Dorsolateral prefrontal cortex (tissue), 120 donors: ENCODE measurements at regions of chr19 and their contacts with region 1.

Region 1: DNA sequence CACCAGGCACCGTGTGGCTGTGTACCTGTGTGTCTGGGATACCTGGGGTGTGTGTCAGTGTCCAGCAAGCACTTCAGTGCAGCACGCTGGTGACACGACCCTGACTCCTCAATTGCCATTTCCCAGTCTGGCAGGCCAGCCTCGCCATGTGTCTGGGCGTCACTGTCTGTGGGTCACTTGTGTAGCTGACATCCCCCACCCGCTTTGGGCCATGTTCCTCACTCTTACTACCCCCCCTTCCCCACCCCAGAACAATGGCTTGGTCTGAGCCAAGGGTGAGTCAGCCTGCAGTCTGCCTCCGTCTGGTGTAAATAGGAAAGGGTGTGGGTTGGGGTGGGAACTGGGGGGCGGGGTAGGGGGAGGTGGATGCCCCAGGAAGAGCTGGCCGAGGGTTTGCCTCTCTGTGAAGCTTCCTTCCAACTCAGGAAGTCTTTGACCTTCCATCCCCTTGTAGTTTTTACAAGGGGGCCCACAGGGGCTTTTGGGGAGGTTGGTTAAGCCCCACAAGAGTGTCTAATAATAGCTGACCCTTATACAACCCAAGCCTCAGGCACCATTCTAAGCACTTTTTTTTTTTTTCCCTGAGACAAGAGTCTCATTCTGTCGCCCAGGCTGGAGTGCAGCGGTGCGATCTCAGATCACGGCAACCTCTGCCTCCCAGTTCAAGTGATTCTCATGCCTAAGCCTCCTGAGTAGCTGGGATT is 17.6 kb downstream of the NOVA2 start:
- DNase-seq: peak in 9 of 10 donors; percentile 72 to 90 (median 86)
- H3K4me3 ChIP-seq: peak overlapping the region in 11 of 59 donors; percentile 7 to 37 (median 14)
- H3K27ac ChIP-seq: peak overlapping the region in 55 of 59 donors; percentile 29 to 83 (median 68)
- H3K27me3 ChIP-seq: no peaks in the 10 kb centered on the region
- CTCF ChIP-seq: peak in 16 of 56 donors; percentile 4 to 40 (median 25)

Region 2: GRCh38 chr19:45746866-45747265 is 209.2 kb before region 1 on chr19:
- intact Hi-C with region 1: no loop called
- DNase-seq: no peak
- H3K4me3 ChIP-seq: no peak overlapping the region
- H3K27ac ChIP-seq: no peak overlapping the region
- H3K27me3 ChIP-seq: no peaks in the 10 kb centered on the region
- CTCF ChIP-seq: no peak

Region 3: GRCh38 chr19:45919678-45920077 is 36.4 kb before region 1 on chr19:
- intact Hi-C with region 1: loop called (anchors 5 kb)
- DNase-seq: peak in 7 of 10 donors; percentile 44 to 73 (median 59)
- H3K4me3 ChIP-seq: peak overlapping the region in 41 of 59 donors; percentile 6 to 61 (median 35)
- H3K27ac ChIP-seq: peak overlapping the region in 50 of 59 donors; percentile 8 to 87 (median 70)
- H3K27me3 ChIP-seq: no peaks in the 10 kb centered on the region
- CTCF ChIP-seq: peak in 2 of 56 donors; percentile 8 to 9

Region 4: GRCh38 chr19:46000491-46001246 is 44.6 kb after region 1 on chr19:
- intact Hi-C with region 1: loop called (anchors 5 kb)
- DNase-seq: peak; percentile 53 to 87 (median 79)
- H3K4me3 ChIP-seq: peak overlapping the region; percentile 9 to 74 (median 54)
- H3K27ac ChIP-seq: peak overlapping the region in 23 of 59 donors; percentile 6 to 86 (median 72)
- H3K27me3 ChIP-seq: no peaks in the 10 kb centered on the region
- CTCF ChIP-seq: no peak

Region 5: GRCh38 chr19:46009530-46010510 is 53.8 kb after region 1 on chr19:
- intact Hi-C with region 1: loop called in 1 of 2 experiments (anchors 5 kb)
- DNase-seq: peak; percentile 73 to 91 (median 84)
- H3K4me3 ChIP-seq: peak overlapping the region in 11 of 59 donors; percentile 0 to 47 (median 21)
- H3K27ac ChIP-seq: peak overlapping the region in 40 of 59 donors; percentile 5 to 84 (median 48)
- H3K27me3 ChIP-seq: peaks cover 0 to 5% (median 0%) of the 10 kb centered on the region in 45 donors
- CTCF ChIP-seq: peak; percentile 69 to 96 (median 86)